ENCODE measurements at regions of chr1 and their contacts with region 1.

Region 1: DNA sequence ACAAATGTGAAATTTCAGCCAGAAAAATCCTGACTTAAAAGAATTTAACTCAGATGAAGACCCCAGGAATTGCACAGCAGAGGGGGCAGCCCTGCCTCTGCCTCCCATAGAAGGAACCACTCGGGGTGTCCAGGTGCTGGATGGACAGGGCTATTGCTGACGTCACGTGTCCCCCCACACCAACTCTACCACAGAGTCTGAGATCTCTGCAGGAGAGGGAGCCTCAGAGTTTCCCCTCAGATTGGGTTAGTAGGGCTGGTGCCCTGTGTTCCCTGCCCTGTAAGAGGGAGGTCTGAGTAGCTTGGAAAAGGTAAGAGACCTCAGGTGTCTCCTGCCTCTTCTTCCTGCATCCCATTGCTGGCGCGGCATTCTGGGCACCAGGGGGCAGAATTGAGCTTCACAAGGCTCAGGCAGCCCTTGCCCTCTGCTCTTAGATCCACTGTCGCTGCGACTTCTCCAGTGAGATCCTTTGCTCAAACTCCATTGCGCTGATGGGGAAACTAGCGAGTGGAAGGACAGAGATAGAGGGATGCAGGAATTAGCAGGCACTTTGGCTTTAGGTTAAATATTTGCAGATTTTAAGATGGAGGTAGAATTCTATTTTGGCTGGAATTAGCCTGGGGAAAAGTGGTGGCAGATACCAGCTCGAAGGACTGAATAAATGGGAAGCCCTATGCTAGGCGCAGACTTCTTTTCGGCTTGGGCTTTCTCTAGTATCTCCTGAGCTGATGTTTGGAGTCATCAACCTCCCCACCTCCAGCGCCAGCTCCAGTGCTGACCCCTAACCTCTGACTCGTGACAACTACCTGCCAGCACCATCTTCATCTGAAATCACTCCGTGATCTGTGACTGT is 42.8 kb upstream of the DMBX1 start:
- DNase-seq: peak; percentile 74 to 86 (median 80)
- H3K4me3 ChIP-seq: no peak overlapping the region
- H3K27ac ChIP-seq: no peak overlapping the region
- H3K27me3 ChIP-seq: peaks cover 0 to 21% (median 9%) of the 10 kb centered on the region in 45 donors
- CTCF ChIP-seq: peak; percentile 42 to 94 (median 88)

Region 2: DNA sequence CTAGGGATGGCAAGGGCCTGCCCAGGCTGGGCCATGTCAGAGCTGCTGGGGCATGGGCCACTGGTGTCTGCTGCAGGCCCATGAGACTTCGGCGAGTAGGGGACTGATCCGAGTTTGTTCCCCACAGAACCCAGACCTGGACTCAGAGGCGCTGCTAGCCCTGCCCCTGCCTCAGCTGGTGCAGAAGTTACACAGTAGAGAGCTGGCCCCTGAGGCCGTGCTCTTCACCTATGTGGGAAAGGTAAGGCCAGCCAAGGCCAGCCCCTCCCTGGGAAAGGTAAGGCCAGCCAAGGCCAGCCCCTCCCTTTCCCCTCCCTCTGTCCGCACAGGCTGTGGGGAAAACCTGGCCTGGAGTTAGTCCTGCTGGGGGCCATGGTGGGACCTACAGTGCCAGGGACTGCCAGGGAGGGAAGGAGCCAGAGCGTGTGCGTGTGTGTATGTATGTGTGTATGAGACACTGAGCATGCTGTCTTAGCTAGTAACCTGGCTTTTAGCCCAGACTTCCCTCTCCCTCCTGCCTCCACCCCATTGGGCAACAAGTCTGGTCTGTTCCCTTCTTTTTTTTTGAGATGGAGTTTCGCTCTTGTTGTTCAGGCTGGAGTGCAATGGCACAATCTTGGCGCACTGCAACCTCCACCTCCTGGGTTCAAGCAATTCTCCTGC is 44.8 kb before region 1 on chr1:
- intact Hi-C with region 1: loop called in 1 of 2 experiments (anchors 5 kb)
- DNase-seq: peak; percentile 68 to 94 (median 88)
- H3K4me3 ChIP-seq: peak overlapping the region in 54 of 59 donors; percentile 1 to 54 (median 32)
- H3K27ac ChIP-seq: peak overlapping the region; percentile 34 to 97 (median 90)
- H3K27me3 ChIP-seq: no peaks in the 10 kb centered on the region
- CTCF ChIP-seq: peak in 16 of 56 donors; percentile 6 to 42 (median 19)

Region 3: GRCh38 chr1:46477153-46477929 is 30.5 kb after region 1 on chr1:
- intact Hi-C with region 1: no loop called
- DNase-seq: peak; percentile 59 to 84 (median 77)
- H3K4me3 ChIP-seq: no peak overlapping the region
- H3K27ac ChIP-seq: no peak overlapping the region
- H3K27me3 ChIP-seq: peaks cover 0 to 33% (median 0%) of the 10 kb centered on the region in 45 donors
- CTCF ChIP-seq: peak; percentile 46 to 95 (median 88)